ENCODE measurements at regions of chr5 and their contacts with region 1.

Region 1: DNA sequence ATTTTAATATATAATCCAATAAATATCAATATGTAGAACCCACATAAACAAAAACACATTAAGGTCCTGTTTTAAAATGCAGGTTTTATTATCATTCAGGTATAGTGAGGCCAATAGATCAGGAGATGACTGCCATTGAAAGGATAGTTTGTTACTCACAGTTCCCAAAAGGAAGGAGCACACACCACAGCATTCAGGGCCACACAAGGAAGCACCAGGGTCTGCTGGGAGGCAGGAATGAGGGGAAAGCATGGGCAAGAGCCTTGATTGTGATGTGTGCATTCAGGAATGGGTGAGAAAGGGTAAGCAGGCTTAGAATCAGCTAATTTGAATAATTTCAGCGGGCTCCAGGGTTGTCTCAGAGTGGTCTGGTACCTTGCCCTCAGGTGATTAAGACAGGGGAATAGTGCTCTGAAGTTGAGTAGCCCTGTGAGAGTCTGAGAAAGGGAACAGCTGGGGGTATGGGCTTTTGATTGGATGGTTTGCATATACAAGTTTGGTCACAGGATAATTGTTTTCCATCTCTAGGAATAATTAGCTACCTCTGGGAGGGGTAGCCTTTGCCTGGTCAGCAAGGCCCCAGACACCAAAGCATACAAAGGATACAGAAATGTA is 19.8 kb upstream of the OTULIN start:
- DNase-seq: no peak

Region 2: GRCh38 chr5:13976867-13977830 is 667.6 kb before region 1 on chr5:
- CTCF ChIA-PET with region 1: interaction called, 10 read pairs
- POLR2A ChIA-PET with region 1: no interaction called
- DNase-seq: peak; percentile 62

Region 3: GRCh38 chr5:14399054-14399692 is 245.6 kb before region 1 on chr5:
- CTCF ChIA-PET with region 1: interaction called, 15 read pairs
- POLR2A ChIA-PET with region 1: no interaction called
- DNase-seq: peak; percentile 35